ENCODE measurements at regions of chr20 and their contacts with region 1.

Region 1: GRCh38 chr20:47620808-47621805 is 119.4 kb downstream of the NCOA3 start:
- DNase-seq: peak; percentile 82
- ATAC-seq: peak; percentile 68
- H3K4me3 ChIP-seq: no peak overlapping the region
- H3K27ac ChIP-seq: no peak overlapping the region
- H3K4me1 ChIP-seq: no peaks in the 10 kb centered on the region
- H3K27me3 ChIP-seq: no peaks in the 10 kb centered on the region
- CTCF ChIP-seq: peak; percentile 92
- POLR2A ChIP-seq: 0 out of 2 replicates have a peak, but pooled peaks have one; percentile 34
- RAD21 ChIP-seq: peak; percentile 91

Region 2: DNA sequence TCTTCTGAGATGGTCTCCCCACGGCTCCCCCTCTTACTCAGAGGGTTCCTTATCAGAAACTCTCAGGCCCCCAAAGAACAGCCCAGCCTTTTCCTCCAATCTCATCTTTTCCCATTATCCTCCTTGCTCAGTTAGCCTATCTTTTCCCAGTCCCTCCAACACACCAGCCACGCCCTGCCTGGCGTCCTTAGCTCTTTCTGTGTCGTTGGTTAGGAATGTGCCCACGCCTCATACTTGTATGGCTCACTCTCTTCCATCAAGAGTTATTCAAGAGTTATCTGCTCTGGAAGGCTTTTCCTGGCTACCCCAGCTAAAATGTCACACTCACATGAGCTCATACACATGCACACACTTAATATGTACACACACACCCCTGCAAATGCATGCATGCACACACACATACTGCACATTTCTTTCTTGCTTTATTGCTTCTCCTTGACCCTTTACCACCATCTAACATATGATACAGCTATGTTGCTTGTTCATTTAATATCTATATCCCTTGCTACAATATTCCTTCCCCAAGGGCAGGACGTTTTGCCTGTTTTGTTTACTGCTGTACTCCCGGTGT is 874.1 kb before region 1 on chr20:
- CTCF ChIA-PET with region 1: no interaction called
- POLR2A ChIA-PET with region 1: no interaction called
- dilution Hi-C with region 1: no loop called
- in situ Hi-C with region 1: loop called (anchors 10 kb)
- intact Hi-C with region 1: loop called (anchors 5 kb)
- DNase-seq: peak; percentile 71
- ATAC-seq: peak; percentile 72
- H3K4me3 ChIP-seq: no peak overlapping the region
- H3K27ac ChIP-seq: no peak overlapping the region
- H3K4me1 ChIP-seq: no peaks in the 10 kb centered on the region
- H3K27me3 ChIP-seq: no peaks in the 10 kb centered on the region
- CTCF ChIP-seq: no peak
- POLR2A ChIP-seq: no peak
- RAD21 ChIP-seq: no peak

Region 3: GRCh38 chr20:47196091-47197081 is 424.7 kb before region 1 on chr20:
- CTCF ChIA-PET with region 1: no interaction called
- POLR2A ChIA-PET with region 1: no interaction called
- dilution Hi-C with region 1: no loop called
- in situ Hi-C with region 1: loop called (anchors 10 kb)
- intact Hi-C with region 1: loop called (anchors 1 kb)
- DNase-seq: peak; percentile 60
- ATAC-seq: peak; percentile 94
- H3K4me3 ChIP-seq: no peak overlapping the region
- H3K27ac ChIP-seq: no peak overlapping the region
- H3K4me1 ChIP-seq: peaks cover 3% of the 10 kb centered on the region; the same call in 1 of the 2 replicates
- H3K27me3 ChIP-seq: no peaks in the 10 kb centered on the region
- CTCF ChIP-seq: peak; percentile 96
- POLR2A ChIP-seq: peak; percentile 42; the same call in 1 of the 2 replicates
- RAD21 ChIP-seq: peak; percentile 96

Region 4: DNA sequence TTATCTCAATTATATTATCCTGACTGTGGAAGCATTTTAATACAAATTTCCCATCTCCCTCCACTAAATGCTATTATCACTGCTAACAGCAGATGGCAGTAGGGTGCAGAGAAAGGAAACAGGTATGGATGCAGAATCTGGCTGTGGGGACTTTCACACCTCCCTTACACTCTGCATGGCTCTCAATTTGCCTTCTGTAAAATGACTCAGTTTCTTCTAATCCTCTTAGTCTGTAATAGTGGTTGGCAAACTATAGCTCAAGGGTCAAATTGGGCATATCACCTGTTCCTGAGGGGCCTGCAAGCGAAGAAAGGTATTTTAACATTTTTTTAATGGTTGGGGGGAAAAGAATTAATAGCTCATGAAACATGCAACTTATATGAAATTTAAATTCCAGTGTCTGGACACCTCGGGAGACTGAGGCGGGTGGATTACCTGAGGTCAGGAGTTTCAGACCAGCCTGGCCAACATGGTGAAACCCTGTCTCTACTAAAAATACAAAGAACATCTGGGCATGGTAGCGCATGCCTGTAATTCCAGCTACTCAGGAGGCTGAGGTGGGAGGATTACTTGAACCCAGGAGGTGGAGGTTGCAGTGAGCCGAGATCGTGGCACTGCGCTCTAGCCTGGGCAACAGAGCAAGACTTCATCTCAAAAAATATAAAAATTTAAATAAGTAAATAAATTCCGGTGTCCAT is 348.1 kb before region 1 on chr20:
- CTCF ChIA-PET with region 1: interaction called, 5 read pairs
- POLR2A ChIA-PET with region 1: no interaction called
- dilution Hi-C with region 1: no loop called
- in situ Hi-C with region 1: loop called (anchors 5 kb)
- intact Hi-C with region 1: loop called (anchors 1 kb)
- DNase-seq: peak; percentile 71
- ATAC-seq: peak; percentile 50
- H3K4me3 ChIP-seq: no peak overlapping the region
- H3K27ac ChIP-seq: peak overlapping the region; percentile 32; the same call in 1 of the 2 replicates
- H3K4me1 ChIP-seq: peaks cover 20% of the 10 kb centered on the region
- H3K27me3 ChIP-seq: no peaks in the 10 kb centered on the region
- CTCF ChIP-seq: peak; percentile 96
- POLR2A ChIP-seq: 0 out of 2 replicates have a peak, but pooled peaks have one; percentile 34
- RAD21 ChIP-seq: peak; percentile 96

Region 5: DNA sequence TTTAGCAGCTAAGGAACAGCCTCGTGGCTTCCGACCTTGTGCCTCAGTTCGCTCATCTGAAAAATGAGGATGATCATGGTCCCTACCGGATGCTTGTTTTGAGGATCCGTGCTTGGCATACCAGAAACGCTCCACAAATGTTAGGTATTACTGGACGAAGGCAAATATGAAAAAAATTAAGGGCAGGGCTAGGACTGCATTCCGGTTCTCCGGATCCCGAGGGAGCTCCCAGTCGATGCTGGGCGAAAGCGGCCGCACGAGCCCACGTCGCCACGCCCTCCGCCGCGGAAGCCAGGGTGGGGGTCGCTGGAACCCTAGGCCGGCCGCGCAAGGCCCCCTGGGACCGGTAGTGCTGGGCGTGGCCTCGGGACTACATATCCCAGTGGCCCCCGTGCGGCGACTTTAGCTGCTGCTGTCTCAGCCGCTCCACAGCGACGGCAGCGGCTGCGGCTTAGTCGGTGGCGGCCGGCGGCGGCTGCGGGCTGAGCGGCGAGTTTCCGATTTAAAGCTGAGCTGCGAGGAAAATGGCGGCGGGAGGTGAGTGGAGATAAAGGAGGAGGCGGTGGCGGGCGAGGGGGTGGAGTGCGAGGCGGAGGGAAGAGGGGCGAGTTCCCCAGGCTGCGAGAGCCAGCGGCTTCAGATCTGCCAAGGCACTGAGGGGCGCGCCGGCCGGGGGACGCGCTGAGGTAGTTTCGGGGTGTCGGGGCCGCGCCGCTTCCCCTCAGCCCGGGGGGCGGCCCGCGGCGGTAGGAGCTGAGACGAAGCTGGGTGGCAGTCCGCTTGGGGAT is 119.4 kb before region 1 on chr20 and contains the start of gene NCOA3:
- CTCF ChIA-PET with region 1: interaction called, 6 read pairs
- POLR2A ChIA-PET with region 1: no interaction called
- dilution Hi-C with region 1: no loop called
- in situ Hi-C with region 1: no loop called
- intact Hi-C with region 1: loop called (anchors 2 kb)
- DNase-seq: peak; percentile 92
- ATAC-seq: peak; percentile 98
- H3K4me3 ChIP-seq: peak within 1 kb of the TSS; percentile 60
- H3K27ac ChIP-seq: peak within 1 kb of the TSS; percentile 85
- H3K4me1 ChIP-seq: peaks cover 6% of the 10 kb centered on the region
- H3K27me3 ChIP-seq: no peaks in the 10 kb centered on the region
- CTCF ChIP-seq: peak; percentile 38
- POLR2A ChIP-seq: peak; percentile 96
- RAD21 ChIP-seq: peak; percentile 41
- total RNA-seq, gene NCOA3: 27.2 and 29.0 TPM in 2 replicates

Measured in IMR-90 (cell line).